ENCODE measurements at regions of chr18 and their contacts with region 1.

Region 1: GRCh38 chr18:58671111-58671631 is at the start of gene MALT1:
- DNase-seq: peak; percentile 97
- ATAC-seq: peak; percentile 83
- H3K4me3 Mint-ChIP-seq: peak within 1 kb of the TSS; percentile 98
- H3K27ac Mint-ChIP-seq: peak within 1 kb of the TSS; percentile 96
- H3K4me1 Mint-ChIP-seq: peaks cover 63% of the 10 kb centered on the region
- H3K27me3 Mint-ChIP-seq: no peaks in the 10 kb centered on the region
- total RNA-seq, gene MALT1: 39.3 to 40.5 TPM

Region 2: GRCh38 chr18:58605027-58606020 is 65.8 kb before region 1 on chr18:
- CTCF ChIA-PET with region 1: interaction called, 4 read pairs
- POLR2A ChIA-PET with region 1: no interaction called
- intact Hi-C with region 1: loop called in 1 of 2 experiments (anchors 1 kb)
- DNase-seq: peak; percentile 76
- ATAC-seq: peak; percentile 84
- H3K4me3 Mint-ChIP-seq: no peak overlapping the region
- H3K27ac Mint-ChIP-seq: peak overlapping the region; percentile 35
- H3K4me1 Mint-ChIP-seq: peaks cover 56% of the 10 kb centered on the region
- H3K27me3 Mint-ChIP-seq: peaks cover 4% of the 10 kb centered on the region

Region 3: GRCh38 chr18:58682429-58683069 is 11.4 kb after region 1 on chr18:
- CTCF ChIA-PET with region 1: interaction called, 12 read pairs
- POLR2A ChIA-PET with region 1: interaction called, 8 read pairs
- intact Hi-C with region 1: no loop called
- DNase-seq: no peak
- ATAC-seq: no peak
- H3K4me3 Mint-ChIP-seq: no peak overlapping the region
- H3K27ac Mint-ChIP-seq: peak overlapping the region; percentile 67
- H3K4me1 Mint-ChIP-seq: peaks cover 71% of the 10 kb centered on the region
- H3K27me3 Mint-ChIP-seq: no peaks in the 10 kb centered on the region

Region 4: DNA sequence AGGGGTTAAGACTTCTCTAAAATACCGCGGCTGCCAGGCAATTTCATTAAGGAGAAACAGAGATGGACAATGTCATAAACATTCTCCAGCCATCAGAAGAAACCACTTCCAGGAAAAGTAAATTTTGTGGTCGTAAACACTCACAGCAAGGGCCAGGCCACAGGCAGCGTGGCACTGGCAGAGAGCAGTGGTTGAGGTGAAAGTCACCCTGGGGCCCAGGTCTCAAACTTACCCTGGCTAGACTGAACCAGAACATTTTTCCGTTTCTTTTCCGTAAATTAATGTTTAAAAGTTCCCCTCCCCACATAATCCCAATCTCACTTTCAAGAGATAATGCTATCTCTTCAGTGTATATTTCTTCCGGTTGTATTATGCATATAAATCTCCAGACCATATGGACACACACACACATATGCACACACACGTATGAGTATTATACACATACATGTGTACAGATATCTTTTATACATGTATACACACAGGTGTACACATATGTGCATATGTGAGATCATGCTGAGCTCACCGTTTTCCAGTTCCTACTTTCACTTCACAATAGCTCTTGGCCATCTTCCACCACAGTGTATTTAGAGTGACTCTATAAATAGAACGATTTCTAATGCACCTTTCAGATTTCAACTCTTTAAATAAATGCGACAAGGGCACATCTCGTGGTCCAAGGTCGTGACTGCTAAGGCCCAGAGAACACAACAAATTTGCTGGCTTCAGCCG is 90.2 kb after region 1 on chr18:
- CTCF ChIA-PET with region 1: interaction called, 16 read pairs
- POLR2A ChIA-PET with region 1: no interaction called
- intact Hi-C with region 1: loop called (anchors 5 kb)
- DNase-seq: peak; percentile 27
- ATAC-seq: peak; percentile 53
- H3K4me3 Mint-ChIP-seq: no peak overlapping the region
- H3K27ac Mint-ChIP-seq: peak overlapping the region; percentile 2
- H3K4me1 Mint-ChIP-seq: peaks cover 13% of the 10 kb centered on the region
- H3K27me3 Mint-ChIP-seq: peaks cover 18% of the 10 kb centered on the region

Region 5: DNA sequence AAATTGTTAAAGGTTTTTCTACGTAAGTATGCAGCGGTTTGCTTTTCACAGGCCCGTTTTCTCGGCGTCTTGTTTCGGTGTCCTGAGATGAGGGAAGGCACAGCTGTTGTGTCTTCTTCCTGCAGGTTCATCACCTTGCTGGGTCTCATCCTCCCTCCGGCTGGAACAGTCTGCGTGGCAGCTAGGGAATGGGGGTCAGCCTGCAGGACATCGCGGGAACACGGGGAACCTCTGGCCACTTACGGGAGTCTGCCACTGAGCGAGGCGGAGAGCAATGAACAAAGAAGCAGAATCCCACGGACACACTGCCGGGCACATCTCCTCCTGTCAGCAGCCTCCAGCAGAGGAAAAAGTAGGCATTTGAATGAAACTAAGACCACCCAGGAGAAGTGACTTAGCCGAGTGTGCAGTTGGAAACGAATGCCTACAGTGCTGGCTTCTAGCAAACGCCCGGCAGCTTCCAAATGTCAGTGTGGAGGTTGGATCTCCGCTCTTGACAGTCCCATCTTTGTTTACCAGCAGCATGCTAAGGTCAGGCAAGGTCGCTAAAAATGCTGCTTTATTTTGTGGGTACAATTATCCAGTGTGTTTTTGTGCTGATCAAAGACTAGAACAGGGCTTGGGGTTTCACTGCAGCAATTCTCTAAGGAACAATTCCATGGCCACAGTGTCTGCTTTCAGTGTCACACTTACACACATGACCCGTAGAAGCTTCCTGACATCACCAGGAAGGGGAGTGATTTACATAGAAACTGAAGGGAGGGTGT is 358.7 kb after region 1 on chr18:
- CTCF ChIA-PET with region 1: no interaction called
- POLR2A ChIA-PET with region 1: no interaction called
- intact Hi-C with region 1: no loop called
- DNase-seq: no peak
- ATAC-seq: no peak
- H3K4me3 Mint-ChIP-seq: no peak overlapping the region
- H3K27ac Mint-ChIP-seq: no peak overlapping the region
- H3K4me1 Mint-ChIP-seq: no peaks in the 10 kb centered on the region
- H3K27me3 Mint-ChIP-seq: peaks cover 4% of the 10 kb centered on the region

Region 6: DNA sequence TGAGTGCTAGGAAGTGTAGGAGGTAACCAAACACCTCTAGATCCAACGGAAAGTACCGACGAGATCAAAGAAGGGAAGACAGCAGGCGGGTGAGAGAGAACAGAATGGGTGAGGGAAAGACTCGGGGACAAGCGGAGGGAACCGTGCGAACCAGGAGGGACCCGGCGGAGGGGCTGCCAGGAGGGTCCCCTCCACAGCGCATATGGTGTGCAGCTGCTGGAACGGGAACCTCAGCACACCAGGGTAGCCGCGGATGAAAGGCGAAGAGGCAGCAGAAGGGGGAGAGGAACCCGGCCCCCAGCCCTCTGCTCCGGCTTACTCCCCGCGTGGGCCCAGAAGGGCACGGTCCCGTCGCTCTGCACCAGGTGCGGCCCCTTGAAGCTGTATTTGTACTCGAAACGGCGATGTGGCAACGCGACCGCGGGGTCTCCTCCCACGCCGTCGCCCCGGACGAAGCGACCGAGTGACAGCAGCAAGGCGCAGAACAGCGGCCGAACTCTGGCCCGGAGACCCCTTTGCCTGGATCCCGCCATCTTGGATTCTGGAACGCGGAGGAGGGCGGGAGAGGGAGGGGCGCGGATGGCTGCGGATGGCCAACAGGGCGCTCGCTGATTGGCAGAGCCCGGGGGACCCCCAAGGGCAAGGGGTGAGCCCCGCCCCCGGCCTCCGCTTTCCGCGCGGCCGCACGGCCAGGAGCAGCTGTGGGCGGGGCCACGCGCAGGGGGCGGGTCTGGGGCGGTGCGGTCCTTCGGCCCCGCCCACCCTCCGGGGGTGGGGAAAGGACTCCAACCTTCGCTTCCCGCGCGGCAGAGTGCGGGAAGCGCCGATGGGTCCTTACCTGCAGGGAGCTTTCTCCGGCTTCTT is 687.8 kb after region 1 on chr18 and contains the start of gene LMAN1:
- CTCF ChIA-PET with region 1: no interaction called
- POLR2A ChIA-PET with region 1: no interaction called
- intact Hi-C with region 1: loop called in 1 of 2 experiments (anchors 1 kb)
- DNase-seq: peak; percentile 97
- ATAC-seq: peak; percentile 93
- H3K4me3 Mint-ChIP-seq: peak within 1 kb of the TSS; percentile 98
- H3K27ac Mint-ChIP-seq: peak within 1 kb of the TSS; percentile 99
- H3K4me1 Mint-ChIP-seq: peaks cover 29% of the 10 kb centered on the region
- H3K27me3 Mint-ChIP-seq: no peaks in the 10 kb centered on the region
- total RNA-seq, gene LMAN1: 121 to 134 TPM

Measured in activated CD4-positive, alpha-beta T cell treated with anti-CD3 and anti-CD28 coated beads for 36 hours (primary cell).